ENCODE measurements at regions of chr3 and their contacts with region 1.

Region 1: DNA sequence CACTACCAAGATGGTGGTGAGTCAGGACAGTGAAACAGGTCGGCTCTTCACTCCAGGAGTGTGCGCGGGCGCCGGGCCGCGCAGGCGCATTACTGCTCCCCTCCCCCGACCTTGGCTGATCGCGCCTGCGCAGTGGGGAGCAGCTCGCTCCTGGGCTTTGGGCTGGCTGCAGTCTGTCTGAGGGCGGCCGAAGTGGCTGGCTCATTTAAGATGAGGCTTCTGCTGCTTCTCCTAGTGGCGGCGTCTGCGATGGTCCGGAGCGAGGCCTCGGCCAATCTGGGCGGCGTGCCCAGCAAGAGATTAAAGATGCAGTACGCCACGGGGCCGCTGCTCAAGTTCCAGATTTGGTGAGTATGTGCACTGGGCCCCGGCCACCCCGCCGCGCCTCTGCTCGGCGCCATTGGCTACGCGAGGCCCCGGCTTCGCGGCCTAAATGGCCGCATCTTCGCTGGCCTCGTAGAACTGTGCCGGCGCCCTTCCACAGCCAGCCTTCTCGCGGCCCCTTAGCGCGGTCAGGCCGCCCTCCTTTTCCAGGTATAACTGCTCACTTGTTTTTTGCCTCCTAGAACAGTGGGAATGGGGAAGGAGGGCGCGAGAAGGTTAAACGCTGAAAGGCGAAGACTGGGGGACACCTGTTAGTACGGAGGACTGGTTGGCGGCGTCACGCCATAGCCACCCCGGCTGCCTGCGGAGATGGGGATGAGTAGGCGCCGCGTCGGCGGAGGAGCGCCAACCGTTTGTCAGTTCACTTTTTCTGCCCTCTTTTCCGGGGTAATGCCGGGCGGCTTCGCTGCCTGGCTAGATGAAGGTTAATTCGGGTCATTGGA is at the start of gene SELENOT:
- DNase-seq: peak; percentile 94
- ATAC-seq: peak; percentile 70
- H3K4me3 ChIP-seq: peak within 1 kb of the TSS; percentile 92
- H3K27ac ChIP-seq: peak within 1 kb of the TSS; percentile 92
- H3K4me1 ChIP-seq: peaks cover 16% of the 10 kb centered on the region
- H3K27me3 ChIP-seq: no peaks in the 10 kb centered on the region
- CTCF ChIP-seq: peak; percentile 2 to 22 (median 10); a peak in 1 of 6 replicates
- EP300 ChIP-seq: peak in 1 of 2 experiments; percentile 32; a peak in 1 of 4 replicates
- POLR2A ChIP-seq: peak; percentile 100
- RAD21 ChIP-seq: 0 out of 2 replicates have a peak, but pooled peaks have one; percentile 1
- polyA plus RNA-seq, gene SELENOT: 323 to 593 TPM

Region 2: DNA sequence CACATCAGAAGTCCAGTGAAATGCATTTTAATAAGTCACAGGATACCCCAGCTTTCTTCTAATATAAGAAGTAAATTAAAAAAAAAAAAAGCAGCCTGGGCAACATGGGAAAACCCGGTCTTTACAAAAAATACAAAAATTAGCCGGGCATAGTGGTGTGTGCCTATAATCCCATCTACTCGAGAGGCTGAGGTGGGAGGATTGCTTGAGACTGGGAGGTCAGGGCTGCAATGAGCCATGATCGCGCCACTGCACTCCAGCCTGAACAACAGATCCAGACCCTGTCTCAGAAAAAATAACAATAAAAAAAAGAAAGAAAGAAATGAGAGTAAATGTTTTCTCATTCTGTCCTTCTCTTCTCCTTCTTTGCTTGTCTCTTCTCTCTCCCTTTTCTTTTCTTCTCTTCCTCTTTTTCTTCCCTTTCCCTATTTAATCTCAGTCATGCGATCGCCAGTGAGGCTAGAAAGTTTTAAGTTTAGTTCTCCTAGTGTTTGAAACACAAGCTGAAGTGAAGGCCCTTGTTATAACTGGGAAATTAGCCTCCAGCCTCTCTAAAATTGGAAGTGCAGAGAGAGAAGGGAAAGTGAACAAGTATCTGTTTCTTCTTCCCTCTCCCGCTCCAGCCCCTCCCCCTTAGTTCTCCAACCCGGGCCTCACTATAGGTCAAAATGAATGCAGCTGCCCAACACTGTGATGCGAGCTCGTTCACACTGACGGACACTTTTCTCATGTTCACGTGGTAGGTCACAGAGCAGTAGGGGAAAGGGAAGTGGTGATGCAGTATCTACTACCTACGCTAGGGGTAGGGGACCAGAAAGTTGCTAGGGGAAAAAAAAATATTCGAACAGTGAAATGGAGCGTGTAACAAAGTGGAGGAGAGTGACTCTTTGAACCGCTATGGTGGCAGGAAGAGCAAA is 218.8 kb before region 1 on chr3:
- CTCF ChIA-PET with region 1: no interaction called
- POLR2A ChIA-PET with region 1: no interaction called
- RAD21 ChIA-PET with region 1: interaction called, 4 read pairs
- SMC1A ChIA-PET with region 1: interaction called, 4 read pairs
- in situ Hi-C with region 1: no loop called
- intact Hi-C with region 1: loop called (anchors 2 kb)
- DNase-seq: peak; percentile 97
- ATAC-seq: peak; percentile 92
- H3K4me3 ChIP-seq: peak overlapping the region; percentile 58
- H3K27ac ChIP-seq: peak overlapping the region; percentile 99
- H3K4me1 ChIP-seq: peaks cover 23% of the 10 kb centered on the region
- H3K27me3 ChIP-seq: no peaks in the 10 kb centered on the region
- CTCF ChIP-seq: peak; percentile 35 to 61 (median 60)
- EP300 ChIP-seq: no peak
- POLR2A ChIP-seq: peak; percentile 59
- RAD21 ChIP-seq: peak; percentile 47; the same call in 1 of the 2 replicates

Region 3: DNA sequence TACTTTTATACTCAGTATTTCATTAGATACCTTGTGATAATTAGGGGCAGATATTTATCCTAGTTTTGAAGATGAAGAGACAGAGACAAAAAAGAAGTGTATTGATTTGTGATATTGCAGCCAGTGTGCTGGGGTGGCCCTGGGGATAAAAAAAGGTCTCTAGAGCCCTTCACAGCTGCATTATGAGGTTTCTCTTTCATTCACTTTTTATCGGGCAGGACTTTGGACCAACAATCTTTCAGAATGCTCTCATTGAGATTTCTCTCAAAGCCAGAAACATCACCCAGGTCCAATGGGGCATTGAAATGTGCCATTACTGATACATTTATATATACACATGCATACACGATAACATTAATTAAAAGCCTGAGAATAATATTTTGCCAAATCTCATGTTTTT is 20.7 kb before region 1 on chr3:
- CTCF ChIA-PET with region 1: interaction called, 18 read pairs
- POLR2A ChIA-PET with region 1: interaction called, 21 read pairs
- RAD21 ChIA-PET with region 1: interaction called, 25 read pairs
- SMC1A ChIA-PET with region 1: interaction called, 26 read pairs
- in situ Hi-C with region 1: no loop called
- intact Hi-C with region 1: loop called (anchors 1 kb)
- DNase-seq: no peak
- ATAC-seq: peak; percentile 89
- H3K4me3 ChIP-seq: no peak overlapping the region
- H3K27ac ChIP-seq: peak overlapping the region; percentile 88
- H3K4me1 ChIP-seq: peaks cover 12% of the 10 kb centered on the region
- H3K27me3 ChIP-seq: no peaks in the 10 kb centered on the region
- CTCF ChIP-seq: no peak
- EP300 ChIP-seq: no peak
- POLR2A ChIP-seq: no peak
- RAD21 ChIP-seq: no peak

Region 4: GRCh38 chr3:150588027-150588830 is 15.1 kb before region 1 on chr3:
- CTCF ChIA-PET with region 1: interaction called, 18 read pairs
- POLR2A ChIA-PET with region 1: interaction called, 21 read pairs
- RAD21 ChIA-PET with region 1: interaction called, 25 read pairs
- SMC1A ChIA-PET with region 1: interaction called, 26 read pairs
- in situ Hi-C with region 1: no loop called
- intact Hi-C with region 1: no loop called
- DNase-seq: no peak
- ATAC-seq: no peak
- H3K4me3 ChIP-seq: no peak overlapping the region
- H3K27ac ChIP-seq: no peak overlapping the region
- H3K4me1 ChIP-seq: no peaks in the 10 kb centered on the region
- H3K27me3 ChIP-seq: no peaks in the 10 kb centered on the region
- CTCF ChIP-seq: no peak
- EP300 ChIP-seq: no peak
- POLR2A ChIP-seq: no peak
- RAD21 ChIP-seq: no peak

Region 5: GRCh38 chr3:150703299-150704134 is 100.2 kb after region 1 on chr3 and contains the start of gene ERICH6:
- CTCF ChIA-PET with region 1: interaction called, 5 read pairs
- POLR2A ChIA-PET with region 1: interaction called, 11 read pairs
- RAD21 ChIA-PET with region 1: interaction called, 10 read pairs
- SMC1A ChIA-PET with region 1: interaction called, 5 read pairs
- in situ Hi-C with region 1: no loop called
- intact Hi-C with region 1: loop called (anchors 5 kb)
- DNase-seq: peak; percentile 55
- ATAC-seq: peak; percentile 100
- H3K4me3 ChIP-seq: peak within 1 kb of the TSS; percentile 62
- H3K27ac ChIP-seq: peak within 1 kb of the TSS; percentile 63
- H3K4me1 ChIP-seq: peaks cover 5% of the 10 kb centered on the region
- H3K27me3 ChIP-seq: no peaks in the 10 kb centered on the region
- CTCF ChIP-seq: peak; percentile 5 to 23 (median 9); a peak in 2 of 6 replicates
- EP300 ChIP-seq: peak in 1 of 2 experiments; percentile 46; a peak in 1 of 4 replicates
- POLR2A ChIP-seq: peak; percentile 80
- RAD21 ChIP-seq: no peak
- polyA plus RNA-seq, gene ERICH6: 0.40 TPM in 1 of 2 experiments, not detected in the other